ENCODE measurements at regions of chr16 and their contacts with region 1.

Region 1: GRCh38 chr16:4846891-4847773 is at the starts of genes GLYR1 and UBN1:
- DNase-seq: peak; percentile 99
- H3K4me3 ChIP-seq: peak within 1 kb of the TSS; percentile 74 to 78
- H3K4me3 Mint-ChIP-seq: peak within 1 kb of the TSS; percentile 89 to 93 (median 92)
- H3K27ac ChIP-seq: peak within 1 kb of the TSS; percentile 95
- H3K27ac Mint-ChIP-seq: peak within 1 kb of the TSS; percentile 90 to 96 (median 95)
- H3K4me1 ChIP-seq: peaks cover 55% of the 10 kb centered on the region
- H3K4me1 Mint-ChIP-seq: peaks cover 42 to 65% (median 53%) of the 10 kb centered on the region in 4 donors
- H3K27me3 ChIP-seq: no peaks in the 10 kb centered on the region
- H3K27me3 Mint-ChIP-seq: no peaks in the 10 kb centered on the region
- total RNA-seq, gene GLYR1: 117 to 121 TPM
- total RNA-seq, gene UBN1: 40.4 to 42.7 TPM

Region 2: DNA sequence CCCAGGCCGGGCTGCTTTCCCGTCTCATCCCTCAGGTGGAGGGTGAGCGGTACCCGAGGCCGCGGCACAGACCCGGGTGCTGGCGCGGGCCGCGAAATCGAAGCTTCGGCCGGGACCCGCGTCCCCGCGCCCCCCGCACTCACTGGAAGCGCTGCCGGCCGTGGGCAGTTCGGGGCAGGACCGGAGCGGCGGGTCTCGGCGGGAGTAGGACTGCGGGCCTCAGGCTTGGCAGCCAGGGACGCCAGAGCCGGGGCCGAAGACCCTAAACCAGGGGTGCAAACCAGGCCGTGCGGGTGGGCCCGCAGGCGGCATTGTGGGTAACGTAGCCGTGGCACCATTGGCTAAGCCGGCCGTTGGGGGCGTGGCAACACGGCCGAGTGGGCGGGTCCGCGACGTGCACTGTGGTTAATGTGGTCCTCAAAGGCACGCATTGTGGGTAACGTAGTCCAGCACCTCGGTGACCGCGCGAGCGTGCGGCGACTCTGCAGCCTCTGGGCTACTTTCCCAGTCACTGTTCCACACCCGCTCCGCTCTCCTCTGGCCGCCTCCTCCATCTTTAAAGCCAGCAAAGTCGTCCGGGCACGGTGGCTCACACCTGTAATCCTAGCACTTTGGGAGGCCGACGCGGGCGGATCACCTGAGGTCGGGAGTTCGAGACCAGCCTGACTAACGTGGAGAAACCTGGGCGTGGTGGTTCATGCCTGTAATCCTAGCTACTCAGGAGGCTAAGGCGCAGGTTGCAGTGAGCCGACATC is 80.1 kb before region 1 on chr16 and contains the start of gene ZNF500:
- CTCF ChIA-PET with region 1: no interaction called
- POLR2A ChIA-PET with region 1: interaction called, 5 read pairs
- intact Hi-C with region 1: loop called (anchors 1 kb)
- DNase-seq: peak; percentile 90 to 93 (median 93)
- H3K4me3 ChIP-seq: peak within 1 kb of the TSS; percentile 94 to 96
- H3K4me3 Mint-ChIP-seq: peak within 1 kb of the TSS; percentile 92 to 95 (median 94)
- H3K27ac ChIP-seq: peak within 1 kb of the TSS; percentile 79
- H3K27ac Mint-ChIP-seq: peak within 1 kb of the TSS; percentile 89 to 98 (median 94)
- H3K4me1 ChIP-seq: peaks cover 32% of the 10 kb centered on the region
- H3K4me1 Mint-ChIP-seq: peaks cover 16 to 50% (median 35%) of the 10 kb centered on the region in 4 donors
- H3K27me3 ChIP-seq: no peaks in the 10 kb centered on the region
- H3K27me3 Mint-ChIP-seq: no peaks in the 10 kb centered on the region
- total RNA-seq, gene ZNF500: 33.9 to 35.6 TPM

Region 3: GRCh38 chr16:4802659-4803287 is 44.4 kb before region 1 on chr16:
- CTCF ChIA-PET with region 1: no interaction called
- POLR2A ChIA-PET with region 1: interaction called, 8 read pairs
- intact Hi-C with region 1: loop called (anchors 2 kb)
- DNase-seq: peak; percentile 88 to 97 (median 92)
- H3K4me3 ChIP-seq: peak overlapping the region; percentile 52 to 58
- H3K4me3 Mint-ChIP-seq: peak overlapping the region; percentile 82 to 90 (median 85)
- H3K27ac ChIP-seq: peak overlapping the region; percentile 72
- H3K27ac Mint-ChIP-seq: peak overlapping the region; percentile 66 to 97 (median 82)
- H3K4me1 ChIP-seq: peaks cover 18% of the 10 kb centered on the region
- H3K4me1 Mint-ChIP-seq: peaks cover 1 to 25% (median 11%) of the 10 kb centered on the region in 4 donors
- H3K27me3 ChIP-seq: no peaks in the 10 kb centered on the region
- H3K27me3 Mint-ChIP-seq: no peaks in the 10 kb centered on the region

Region 4: DNA sequence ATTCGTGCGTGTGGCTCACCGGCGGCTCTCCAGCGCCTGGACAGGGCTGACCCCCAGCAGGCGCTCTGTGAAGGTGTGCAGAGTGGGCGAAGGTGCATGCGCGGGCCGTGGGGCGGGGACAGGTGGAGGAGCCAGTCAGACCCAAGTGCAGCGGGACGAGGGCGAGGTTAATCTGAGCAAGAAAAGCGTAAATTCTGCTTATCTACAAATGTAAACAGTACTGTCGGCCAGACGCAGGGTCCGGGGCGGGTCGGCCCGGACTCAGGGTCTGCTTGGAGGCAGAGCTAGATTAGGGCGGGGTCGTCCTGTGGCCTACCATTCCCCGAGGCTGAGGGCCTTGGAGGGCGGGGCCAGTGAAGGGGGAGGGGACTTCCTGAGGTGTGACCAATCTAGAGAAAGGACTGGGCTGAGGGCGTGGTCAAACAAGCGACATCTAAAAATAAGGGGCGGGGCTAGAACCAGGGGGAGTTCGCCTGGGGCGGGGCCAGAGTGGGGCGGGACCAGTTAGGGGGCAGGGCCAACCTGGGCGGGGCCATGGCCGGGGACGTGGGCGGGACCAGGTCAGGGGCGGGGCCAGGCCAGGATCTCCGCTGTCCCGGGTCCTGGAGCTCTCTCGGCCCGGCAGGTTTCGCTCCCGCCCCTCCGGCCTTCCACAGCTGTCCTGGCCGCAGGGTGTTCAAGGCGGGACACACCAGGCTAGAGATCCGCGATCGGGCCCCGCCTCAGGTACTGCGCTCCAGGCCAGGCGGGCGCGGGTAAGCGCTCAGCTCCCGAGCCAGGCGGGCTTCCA is 110.8 kb after region 1 on chr16 and contains the start of gene SEC14L5:
- CTCF ChIA-PET with region 1: no interaction called
- POLR2A ChIA-PET with region 1: no interaction called
- intact Hi-C with region 1: loop called (anchors 1 kb)
- DNase-seq: peak; percentile 86 to 96 (median 89)
- H3K4me3 ChIP-seq: peak within 1 kb of the TSS; percentile 23 to 45
- H3K4me3 Mint-ChIP-seq: peak within 1 kb of the TSS; percentile 78 to 92 (median 86)
- H3K27ac ChIP-seq: no peak within 1 kb of the TSS
- H3K27ac Mint-ChIP-seq: peak within 1 kb of the TSS; percentile 1 to 77 (median 57)
- H3K4me1 ChIP-seq: peaks cover 16% of the 10 kb centered on the region
- H3K4me1 Mint-ChIP-seq: peaks cover 12 to 28% (median 20%) of the 10 kb centered on the region in 4 donors
- H3K27me3 ChIP-seq: peaks cover 11% of the 10 kb centered on the region
- H3K27me3 Mint-ChIP-seq: peaks cover 21 to 30% of the 10 kb centered on the region in 2 donors
- total RNA-seq, gene SEC14L5: not detected

Measured in CD4-positive, alpha-beta memory T cell (primary cell).